Activated CD8-positive, alpha-beta T cell treated with anti-CD3 and anti-CD28 coated beads, Interleukin-2, amount 10 ng/mL, durations not matched to agents 7 days and 5 days (primary cell): ENCODE measurements at regions of chr14 and their contacts with region 1.

Region 1: DNA sequence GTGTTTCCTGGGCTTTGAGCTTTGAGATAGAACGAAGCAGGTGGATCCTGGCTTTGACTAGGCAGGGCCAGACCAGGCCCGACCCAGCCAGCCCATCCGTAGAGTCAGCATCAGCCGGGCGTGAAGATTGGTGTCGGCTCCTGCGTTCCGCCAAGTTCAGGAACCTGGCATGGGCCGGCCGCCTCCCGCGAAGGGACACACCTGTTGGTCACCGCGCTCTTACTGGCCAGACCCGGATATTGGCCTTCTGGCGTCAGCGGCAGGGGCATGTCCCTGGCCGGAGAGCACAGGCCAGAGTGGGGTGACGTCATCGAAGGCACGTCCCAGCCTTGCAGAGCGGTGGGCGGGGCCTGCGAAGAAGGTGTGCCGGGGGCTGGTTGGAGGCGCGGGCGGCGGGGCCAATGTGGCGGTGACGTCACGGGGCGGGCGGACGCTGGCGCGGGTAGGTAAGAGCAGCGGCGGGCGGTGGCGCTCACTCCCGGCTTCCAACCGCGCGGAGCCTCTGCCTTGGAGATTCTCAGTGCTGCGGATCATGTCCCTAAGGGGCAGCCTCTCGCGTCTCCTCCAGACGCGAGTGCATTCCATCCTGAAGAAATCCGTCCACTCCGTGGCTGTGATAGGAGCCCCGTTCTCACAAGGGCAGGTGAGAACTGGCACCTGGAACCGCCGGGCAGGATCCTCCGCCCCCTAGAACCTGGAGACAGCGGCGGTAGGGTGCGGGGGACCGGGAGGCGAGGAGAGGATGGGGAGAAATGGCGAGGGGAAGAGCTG is at the start of gene ARG2:
- DNase-seq: peak; percentile 98
- ATAC-seq: peak; percentile 85
- H3K4me3 Mint-ChIP-seq: peak within 1 kb of the TSS; percentile 80
- H3K27ac Mint-ChIP-seq: peak within 1 kb of the TSS; percentile 83
- H3K4me1 Mint-ChIP-seq: peaks cover 34% of the 10 kb centered on the region
- H3K27me3 Mint-ChIP-seq: peaks cover 18% of the 10 kb centered on the region
- total RNA-seq, gene ARG2: 1.6 to 2.3 TPM

Region 2: DNA sequence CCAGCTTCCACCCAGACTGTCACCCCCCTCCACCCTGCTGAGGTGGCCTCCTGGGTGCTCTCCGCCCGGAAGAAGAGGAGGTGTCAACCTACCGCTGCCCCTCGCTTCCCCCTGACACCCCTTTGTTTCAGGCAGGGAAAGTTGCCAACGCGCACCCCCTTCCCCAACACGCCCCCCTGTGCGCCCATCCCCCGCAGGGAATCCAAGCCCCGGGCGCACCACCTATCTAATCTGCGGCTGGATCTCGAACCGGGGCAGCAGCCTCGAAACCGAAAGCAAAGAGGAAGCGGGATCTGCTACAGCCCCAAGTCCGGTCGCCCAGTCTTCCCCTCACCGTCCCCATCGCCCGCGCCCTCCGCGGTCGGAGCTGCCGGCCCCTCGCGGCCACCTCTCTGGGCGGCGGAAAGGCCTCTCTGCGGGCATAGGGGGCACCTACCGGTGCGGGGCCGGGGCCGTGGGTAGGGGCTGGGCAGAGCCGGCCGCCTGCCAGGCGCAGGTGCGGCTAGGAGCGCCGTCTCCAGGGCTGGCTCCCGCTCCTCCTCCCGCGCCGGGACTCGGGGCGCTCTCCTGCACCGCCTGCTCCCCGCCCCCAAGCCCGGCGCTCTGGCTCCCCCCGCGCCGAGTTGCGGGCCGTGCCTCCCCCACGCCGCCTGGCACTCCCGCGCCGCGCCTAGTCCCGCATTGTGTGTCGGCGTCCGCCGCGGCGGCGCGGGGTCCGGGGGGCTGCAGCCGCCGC is 104.8 kb before region 1 on chr14:
- CTCF ChIA-PET with region 1: no interaction called
- POLR2A ChIA-PET with region 1: no interaction called
- DNase-seq: peak; percentile 61
- ATAC-seq: peak; percentile 78
- H3K4me3 Mint-ChIP-seq: peak overlapping the region; percentile 80
- H3K27ac Mint-ChIP-seq: peak overlapping the region; percentile 72
- H3K4me1 Mint-ChIP-seq: peaks cover 23% of the 10 kb centered on the region
- H3K27me3 Mint-ChIP-seq: peaks cover 32% of the 10 kb centered on the region

Region 3: GRCh38 chr14:67599698-67600561 is 19.7 kb before region 1 on chr14 and contains the start of gene PIGH:
- CTCF ChIA-PET with region 1: interaction called, 29 read pairs
- POLR2A ChIA-PET with region 1: interaction called, 9 read pairs
- DNase-seq: peak; percentile 95
- ATAC-seq: peak; percentile 99
- H3K4me3 Mint-ChIP-seq: peak within 1 kb of the TSS; percentile 82
- H3K27ac Mint-ChIP-seq: peak within 1 kb of the TSS; percentile 95
- H3K4me1 Mint-ChIP-seq: peaks cover 28% of the 10 kb centered on the region
- H3K27me3 Mint-ChIP-seq: no peaks in the 10 kb centered on the region
- total RNA-seq, gene PIGH: 14.8 to 17.5 TPM

Region 4: GRCh38 chr14:67644428-67644827 is 24.8 kb after region 1 on chr14:
- CTCF ChIA-PET with region 1: interaction called, 18 read pairs
- POLR2A ChIA-PET with region 1: no interaction called
- DNase-seq: no peak
- ATAC-seq: no peak
- H3K4me3 Mint-ChIP-seq: no peak overlapping the region
- H3K27ac Mint-ChIP-seq: no peak overlapping the region
- H3K4me1 Mint-ChIP-seq: peaks cover 8% of the 10 kb centered on the region
- H3K27me3 Mint-ChIP-seq: no peaks in the 10 kb centered on the region

Region 5: DNA sequence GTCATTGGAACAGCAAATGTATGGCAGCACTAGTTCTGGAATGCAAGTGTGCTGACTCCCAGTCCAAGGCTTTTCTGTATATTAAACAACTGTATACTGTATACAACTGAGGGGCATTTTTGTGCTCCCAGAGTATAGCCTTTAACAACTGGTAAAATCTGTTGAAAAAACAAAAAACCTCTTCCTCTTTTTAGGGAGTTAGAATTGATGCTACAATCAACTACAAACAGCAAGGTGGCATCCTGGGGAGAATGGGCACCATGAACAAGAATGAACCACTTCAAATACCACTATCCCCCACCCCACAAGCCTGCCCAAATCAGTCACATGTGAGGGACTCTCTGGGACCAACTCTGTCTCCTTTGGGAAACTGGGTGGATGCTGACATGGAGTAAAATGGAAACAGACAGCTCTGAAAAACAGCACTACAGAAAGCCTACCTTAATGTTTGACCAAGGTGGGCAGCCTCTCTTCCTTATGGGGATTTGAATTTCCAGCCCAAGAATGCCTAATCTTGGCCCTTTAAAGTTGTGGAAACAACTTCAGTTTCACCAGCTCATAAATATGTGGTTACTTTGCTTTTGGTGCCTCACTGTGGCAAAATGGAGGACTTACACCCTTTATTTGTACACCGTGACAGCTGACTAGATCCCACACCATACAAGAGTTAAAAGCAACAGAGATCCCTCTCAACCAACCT is 47.3 kb after region 1 on chr14:
- CTCF ChIA-PET with region 1: interaction called, 143 read pairs
- POLR2A ChIA-PET with region 1: no interaction called
- DNase-seq: peak; percentile 55
- ATAC-seq: peak; percentile 85
- H3K4me3 Mint-ChIP-seq: no peak overlapping the region
- H3K27ac Mint-ChIP-seq: peak overlapping the region; percentile 28
- H3K4me1 Mint-ChIP-seq: peaks cover 33% of the 10 kb centered on the region
- H3K27me3 Mint-ChIP-seq: no peaks in the 10 kb centered on the region

Region 6: DNA sequence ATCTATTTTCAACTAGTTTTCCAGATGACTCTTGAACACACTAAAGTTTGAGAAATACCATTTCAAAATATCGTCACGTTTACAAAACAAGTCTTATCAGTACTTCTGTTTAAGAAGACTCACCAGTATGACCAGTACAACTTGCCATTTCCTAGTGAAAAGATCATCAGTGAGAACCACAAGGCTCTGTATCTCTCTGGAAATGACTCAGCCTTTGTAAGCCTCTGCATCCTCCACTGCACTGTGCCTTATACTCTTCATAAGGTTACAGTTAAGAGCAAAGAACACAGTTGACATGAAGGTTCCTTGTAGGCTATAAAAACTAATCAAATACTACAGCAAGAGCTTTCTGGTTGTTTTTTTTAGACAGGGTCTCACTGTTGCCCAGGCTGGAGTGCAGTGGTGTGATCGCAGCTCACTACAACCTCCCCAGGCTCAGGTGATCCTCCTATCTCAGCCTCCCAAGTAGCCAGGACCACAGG is 60.5 kb after region 1 on chr14:
- CTCF ChIA-PET with region 1: interaction called, 19 read pairs
- POLR2A ChIA-PET with region 1: no interaction called
- DNase-seq: peak; percentile 54
- ATAC-seq: peak; percentile 94
- H3K4me3 Mint-ChIP-seq: no peak overlapping the region
- H3K27ac Mint-ChIP-seq: peak overlapping the region; percentile 63
- H3K4me1 Mint-ChIP-seq: peaks cover 42% of the 10 kb centered on the region
- H3K27me3 Mint-ChIP-seq: no peaks in the 10 kb centered on the region